Activated naive CD4-positive, alpha-beta T cell treated with anti-CD3 and anti-CD28 coated beads, Interleukin-2, amount 10 ng/mL, durations not matched to agents 7 days and 5 days (primary cell): ENCODE measurements at regions of chr5 and their contacts with region 1.

Region 1: DNA sequence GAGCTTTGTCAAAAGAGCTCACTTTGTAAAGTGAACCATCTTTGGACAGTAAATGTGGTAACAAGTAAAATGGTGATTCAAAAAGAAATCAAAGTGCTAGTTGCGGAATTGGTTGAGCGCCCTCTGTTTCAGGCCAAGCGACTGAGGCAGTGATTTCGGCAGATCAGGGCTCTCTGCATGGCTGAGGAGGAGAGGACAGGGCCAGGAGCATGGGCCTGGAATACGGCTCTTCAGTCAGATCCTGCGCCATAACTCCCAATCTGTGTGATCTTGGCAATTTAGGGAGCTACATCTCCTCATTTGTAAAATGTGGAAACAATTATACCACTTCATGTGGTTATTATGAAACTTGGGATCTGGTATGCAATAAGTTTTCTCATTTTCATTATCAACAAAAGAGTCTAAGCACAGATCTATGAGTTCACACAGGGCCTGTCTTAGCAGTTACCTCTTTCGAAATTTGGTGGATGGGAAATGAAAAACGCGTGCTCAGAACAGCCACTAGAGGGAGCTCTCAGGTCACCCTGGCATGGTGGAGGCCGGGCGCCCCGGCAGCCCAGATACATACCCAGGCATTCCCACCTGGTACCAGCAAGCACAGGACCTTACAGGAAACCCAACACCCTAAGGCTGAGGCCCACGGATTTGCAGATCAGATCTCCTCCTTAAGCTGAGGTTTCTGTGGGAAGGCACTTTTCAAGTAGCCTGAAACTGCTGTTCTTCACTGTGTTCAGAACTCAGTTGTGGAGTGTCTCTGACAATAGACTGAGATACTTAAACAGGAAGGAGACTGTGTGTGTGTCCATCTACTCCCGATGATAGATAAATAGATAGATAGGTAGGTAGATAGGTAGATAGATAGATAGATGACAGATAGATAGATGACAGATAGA is 303.7 kb downstream of the RAB3C start:
- DNase-seq: peak; percentile 73
- H3K4me3 Mint-ChIP-seq: no peak overlapping the region
- H3K27ac Mint-ChIP-seq: peak overlapping the region; percentile 56
- H3K4me1 Mint-ChIP-seq: peaks cover 29% of the 10 kb centered on the region
- H3K27me3 Mint-ChIP-seq: peaks cover 21% of the 10 kb centered on the region

Region 2: DNA sequence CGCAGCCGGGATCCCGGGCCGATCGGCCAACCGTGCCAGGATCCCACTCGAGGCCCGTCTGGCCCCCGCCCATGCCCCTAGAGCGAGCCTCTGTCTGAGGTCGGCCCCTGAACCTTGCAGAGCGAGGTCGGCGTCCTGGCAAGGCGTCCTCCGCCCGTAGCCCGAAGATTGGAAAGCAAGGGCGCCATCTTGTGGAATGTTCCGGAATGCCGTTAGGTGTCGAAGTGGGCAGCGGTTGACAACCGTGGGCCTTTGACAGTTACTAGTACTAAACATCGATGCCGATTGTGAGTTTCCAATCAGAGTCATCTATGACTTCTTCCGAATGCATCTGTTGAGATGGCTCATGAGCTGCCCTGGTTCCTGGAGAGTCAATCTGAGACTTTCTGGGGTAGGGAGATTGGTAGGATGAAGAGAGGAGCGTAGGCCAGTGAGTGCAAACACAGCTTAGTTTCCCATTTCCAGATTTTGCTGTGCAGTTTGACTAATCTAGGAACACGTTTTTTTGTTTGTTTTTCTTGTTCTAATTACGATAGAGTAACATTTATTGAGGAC is 425.8 kb before region 1 on chr5:
- CTCF ChIA-PET with region 1: no interaction called
- DNase-seq: peak; percentile 93
- H3K4me3 Mint-ChIP-seq: peak overlapping the region; percentile 79
- H3K27ac Mint-ChIP-seq: peak overlapping the region; percentile 30
- H3K4me1 Mint-ChIP-seq: peaks cover 27% of the 10 kb centered on the region
- H3K27me3 Mint-ChIP-seq: peaks cover 21% of the 10 kb centered on the region

Region 3: DNA sequence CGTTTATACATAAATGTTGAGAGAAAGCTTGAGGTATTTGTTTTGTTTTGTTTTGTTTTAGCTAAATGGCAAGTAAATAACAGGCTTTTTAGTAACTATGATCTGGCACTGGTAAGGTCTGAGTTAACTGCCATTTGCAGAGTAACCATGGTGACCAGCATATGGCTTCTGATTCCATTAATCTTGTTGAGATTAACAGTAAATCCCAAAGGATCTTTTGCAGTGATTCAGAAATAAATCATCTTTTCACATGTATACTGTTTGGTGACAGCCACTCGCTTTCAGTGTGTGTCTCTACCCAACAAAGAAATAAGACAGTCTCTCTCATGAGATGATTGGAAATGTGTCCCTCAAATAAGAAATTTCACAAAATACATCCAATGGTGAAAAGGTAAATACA is 68.1 kb before region 1 on chr5:
- CTCF ChIA-PET with region 1: no interaction called
- DNase-seq: no peak
- H3K4me3 Mint-ChIP-seq: no peak overlapping the region
- H3K27ac Mint-ChIP-seq: no peak overlapping the region
- H3K4me1 Mint-ChIP-seq: no peaks in the 10 kb centered on the region
- H3K27me3 Mint-ChIP-seq: no peaks in the 10 kb centered on the region

Region 4: DNA sequence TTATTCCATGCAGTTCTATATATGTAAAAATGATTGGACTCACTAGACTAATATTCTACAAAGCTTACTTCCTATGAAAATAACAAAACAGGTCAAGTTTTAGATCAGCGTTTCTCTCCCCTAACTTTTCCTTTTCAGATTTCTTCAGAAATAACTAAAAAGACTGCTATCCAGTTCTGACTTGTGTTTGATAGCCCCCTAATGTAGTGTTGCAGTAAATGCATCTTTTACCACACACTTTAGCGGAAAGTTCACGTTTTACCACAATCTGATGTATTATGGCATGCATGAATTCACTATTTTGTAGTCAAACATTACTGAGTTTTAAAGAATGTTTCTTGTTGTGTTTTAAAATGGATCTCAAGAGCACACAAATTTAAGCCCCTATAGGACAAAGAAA is 11.0 kb before region 1 on chr5:
- CTCF ChIA-PET with region 1: interaction called, 24 read pairs
- DNase-seq: no peak
- H3K4me3 Mint-ChIP-seq: no peak overlapping the region
- H3K27ac Mint-ChIP-seq: no peak overlapping the region
- H3K4me1 Mint-ChIP-seq: no peaks in the 10 kb centered on the region
- H3K27me3 Mint-ChIP-seq: peaks cover 26% of the 10 kb centered on the region

Region 5: DNA sequence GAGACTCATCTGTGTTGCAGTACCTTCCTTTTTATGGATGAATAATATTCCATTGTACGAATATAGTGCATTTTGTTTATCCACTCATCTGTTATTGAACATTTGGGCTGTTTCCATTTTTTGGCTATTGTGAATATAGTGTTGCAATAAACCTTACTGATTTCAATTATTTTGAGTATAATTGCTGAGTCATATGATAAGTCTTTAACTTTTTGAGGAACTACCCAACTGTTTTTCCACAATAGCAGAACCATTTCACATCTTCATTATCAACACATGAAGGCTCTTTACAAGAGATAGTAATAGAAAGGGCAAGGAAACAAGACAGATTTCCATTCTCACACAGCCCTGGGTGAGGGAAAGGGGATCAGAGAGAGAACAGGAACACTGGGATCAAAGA is 25.6 kb after region 1 on chr5:
- CTCF ChIA-PET with region 1: no interaction called
- DNase-seq: no peak
- H3K4me3 Mint-ChIP-seq: no peak overlapping the region
- H3K27ac Mint-ChIP-seq: no peak overlapping the region
- H3K4me1 Mint-ChIP-seq: no peaks in the 10 kb centered on the region
- H3K27me3 Mint-ChIP-seq: peaks cover 3% of the 10 kb centered on the region

Region 6: GRCh38 chr5:59180515-59180914 is 294.0 kb after region 1 on chr5:
- CTCF ChIA-PET with region 1: interaction called, 45 read pairs
- DNase-seq: no peak
- H3K4me3 Mint-ChIP-seq: no peak overlapping the region
- H3K27ac Mint-ChIP-seq: no peak overlapping the region
- H3K4me1 Mint-ChIP-seq: peaks cover 22% of the 10 kb centered on the region
- H3K27me3 Mint-ChIP-seq: peaks cover 15% of the 10 kb centered on the region

Region 7: DNA sequence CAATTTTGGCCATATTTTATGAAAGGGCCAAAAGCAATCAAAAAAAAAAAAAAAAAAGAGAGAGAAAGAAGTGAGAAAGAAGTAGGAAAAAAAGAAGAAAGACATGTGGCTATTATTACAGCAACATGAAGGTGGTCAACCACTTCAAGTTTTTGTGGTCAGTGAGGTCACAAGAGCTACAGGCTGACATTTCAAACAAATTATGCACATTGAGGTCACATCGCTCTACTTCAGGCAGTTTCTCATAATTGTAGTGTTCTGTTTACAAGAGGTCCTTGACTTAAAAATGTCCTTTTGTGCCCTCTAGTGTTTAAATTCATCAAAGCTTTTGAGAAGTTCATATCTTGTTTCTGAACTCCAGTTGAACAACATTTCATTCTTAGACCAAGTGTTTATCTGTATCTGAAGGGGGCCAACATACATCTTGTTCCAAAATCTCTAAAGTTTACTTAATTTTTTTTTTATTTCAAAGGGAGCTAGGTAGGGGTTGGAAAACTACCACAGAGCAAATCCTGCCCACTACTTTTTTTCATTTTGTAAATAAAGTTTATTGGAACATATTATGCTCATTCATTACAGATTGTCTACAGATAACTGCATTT is 493.9 kb after region 1 on chr5:
- CTCF ChIA-PET with region 1: interaction called, 11 read pairs
- DNase-seq: peak; percentile 23
- H3K4me3 Mint-ChIP-seq: no peak overlapping the region
- H3K27ac Mint-ChIP-seq: no peak overlapping the region
- H3K4me1 Mint-ChIP-seq: no peaks in the 10 kb centered on the region
- H3K27me3 Mint-ChIP-seq: peaks cover 6% of the 10 kb centered on the region